Spleen (tissue), 13 donors: ENCODE measurements at regions of chr3 and their contacts with region 1.

Region 1: GRCh38 chr3:107651782-107652181 is 129.0 kb downstream of the BBX start:
- DNase-seq: no peak
- H3K4me3 ChIP-seq: no peak overlapping the region
- H3K27ac ChIP-seq: no peak overlapping the region
- H3K4me1 ChIP-seq: peaks cover 0 to 20% (median 9%) of the 10 kb centered on the region in 6 donors
- H3K27me3 ChIP-seq: no peaks in the 10 kb centered on the region
- CTCF ChIP-seq: no peak
- POLR2A ChIP-seq: no peak

Region 2: GRCh38 chr3:107574650-107575049 is 77.1 kb before region 1 on chr3:
- intact Hi-C with region 1: loop called (anchors 10 kb)
- DNase-seq: no peak
- H3K4me3 ChIP-seq: no peak overlapping the region
- H3K27ac ChIP-seq: no peak overlapping the region
- H3K4me1 ChIP-seq: peaks cover 0 to 15% (median 0%) of the 10 kb centered on the region in 6 donors
- H3K27me3 ChIP-seq: no peaks in the 10 kb centered on the region
- CTCF ChIP-seq: peak in 7 of 11 experiments; percentile 37 to 53 (median 45)
- POLR2A ChIP-seq: no peak